ENCODE measurements at regions of chr6 and their contacts with region 1.

Region 1: DNA sequence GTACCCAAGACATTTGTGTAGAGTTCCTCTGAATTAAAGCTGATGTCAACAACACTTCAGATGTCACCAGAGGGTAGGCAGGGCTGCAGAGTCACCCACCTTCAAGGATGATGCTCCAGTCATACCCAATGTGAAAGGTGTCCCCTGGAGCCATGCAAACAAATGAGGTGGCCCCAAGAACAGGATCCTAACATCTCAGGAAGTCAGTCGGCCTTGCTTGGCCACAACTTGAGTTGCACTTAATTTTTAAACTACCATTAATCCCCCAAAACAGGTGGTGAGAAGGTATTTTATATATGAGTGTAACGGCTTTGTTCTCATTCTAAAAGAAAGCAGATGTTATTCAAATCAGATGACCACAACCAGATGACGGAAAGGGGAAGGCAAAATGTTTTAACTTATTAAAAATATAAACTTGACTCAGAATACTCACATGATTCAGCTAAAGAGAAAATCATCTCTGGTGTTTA is 21.1 kb upstream of the SERPINB1 start:
- DNase-seq: no peak
- ATAC-seq: peak; percentile 56
- H3K4me3 Mint-ChIP-seq: peak overlapping the region; percentile 56
- H3K27ac Mint-ChIP-seq: peak overlapping the region; percentile 92
- H3K4me1 Mint-ChIP-seq: peaks cover 91% of the 10 kb centered on the region
- H3K27me3 Mint-ChIP-seq: no peaks in the 10 kb centered on the region
- CTCF ChIP-seq: no peak

Region 2: GRCh38 chr6:2611090-2611489 is 251.7 kb before region 1 on chr6:
- CTCF ChIA-PET with region 1: no interaction called
- POLR2A ChIA-PET with region 1: no interaction called
- intact Hi-C with region 1: no loop called
- DNase-seq: no peak
- ATAC-seq: no peak
- H3K4me3 Mint-ChIP-seq: no peak overlapping the region
- H3K27ac Mint-ChIP-seq: no peak overlapping the region
- H3K4me1 Mint-ChIP-seq: no peaks in the 10 kb centered on the region
- H3K27me3 Mint-ChIP-seq: peaks cover 12% of the 10 kb centered on the region
- CTCF ChIP-seq: no peak

Region 3: GRCh38 chr6:2738373-2738979 is 124.3 kb before region 1 on chr6:
- CTCF ChIA-PET with region 1: no interaction called
- POLR2A ChIA-PET with region 1: interaction called, 12 read pairs
- intact Hi-C with region 1: no loop called
- DNase-seq: no peak
- ATAC-seq: no peak
- H3K4me3 Mint-ChIP-seq: no peak overlapping the region
- H3K27ac Mint-ChIP-seq: no peak overlapping the region
- H3K4me1 Mint-ChIP-seq: peaks cover 10% of the 10 kb centered on the region
- H3K27me3 Mint-ChIP-seq: no peaks in the 10 kb centered on the region
- CTCF ChIP-seq: no peak

Region 4: GRCh38 chr6:2876210-2877056 is 13.7 kb after region 1 on chr6:
- CTCF ChIA-PET with region 1: interaction called, 5 read pairs
- POLR2A ChIA-PET with region 1: no interaction called
- intact Hi-C with region 1: loop called (anchors 2 kb)
- DNase-seq: no peak
- ATAC-seq: peak; percentile 23
- H3K4me3 Mint-ChIP-seq: peak overlapping the region; percentile 88
- H3K27ac Mint-ChIP-seq: peak overlapping the region; percentile 99
- H3K4me1 Mint-ChIP-seq: peaks cover 85% of the 10 kb centered on the region
- H3K27me3 Mint-ChIP-seq: no peaks in the 10 kb centered on the region
- CTCF ChIP-seq: no peak

Region 5: GRCh38 chr6:2891768-2892170 is 29.0 kb after region 1 on chr6:
- CTCF ChIA-PET with region 1: interaction called, 4 read pairs
- POLR2A ChIA-PET with region 1: interaction called, 139 read pairs
- intact Hi-C with region 1: loop called (anchors 1 kb)
- DNase-seq: peak; percentile 58
- ATAC-seq: peak; percentile 84
- H3K4me3 Mint-ChIP-seq: peak overlapping the region; percentile 58
- H3K27ac Mint-ChIP-seq: peak overlapping the region; percentile 87
- H3K4me1 Mint-ChIP-seq: peaks cover 71% of the 10 kb centered on the region
- H3K27me3 Mint-ChIP-seq: no peaks in the 10 kb centered on the region
- CTCF ChIP-seq: no peak

Region 6: DNA sequence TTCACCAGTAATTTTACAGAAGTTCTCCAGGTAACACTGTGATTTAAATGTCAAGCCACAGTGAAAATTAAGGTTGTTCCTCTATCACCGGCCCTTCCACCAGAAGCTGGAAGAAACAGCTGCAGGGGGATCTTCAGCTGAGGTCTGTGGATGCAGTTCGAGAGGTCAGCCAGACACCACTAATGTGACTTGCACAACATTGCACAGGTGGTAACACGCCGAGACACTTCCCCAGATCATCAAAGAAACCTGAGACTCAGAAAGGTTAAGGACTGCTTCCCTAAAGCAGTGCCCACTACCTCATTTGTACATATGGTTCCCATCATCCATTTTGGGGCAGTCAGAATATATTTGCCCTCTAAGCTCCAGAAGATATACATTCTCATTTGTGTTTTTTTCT is 48.4 kb after region 1 on chr6:
- CTCF ChIA-PET with region 1: interaction called, 4 read pairs
- POLR2A ChIA-PET with region 1: interaction called, 35 read pairs
- intact Hi-C with region 1: loop called (anchors 1 kb)
- DNase-seq: no peak
- ATAC-seq: peak; percentile 80
- H3K4me3 Mint-ChIP-seq: peak overlapping the region; percentile 51
- H3K27ac Mint-ChIP-seq: peak overlapping the region; percentile 88
- H3K4me1 Mint-ChIP-seq: peaks cover 43% of the 10 kb centered on the region
- H3K27me3 Mint-ChIP-seq: no peaks in the 10 kb centered on the region
- CTCF ChIP-seq: no peak

Region 7: DNA sequence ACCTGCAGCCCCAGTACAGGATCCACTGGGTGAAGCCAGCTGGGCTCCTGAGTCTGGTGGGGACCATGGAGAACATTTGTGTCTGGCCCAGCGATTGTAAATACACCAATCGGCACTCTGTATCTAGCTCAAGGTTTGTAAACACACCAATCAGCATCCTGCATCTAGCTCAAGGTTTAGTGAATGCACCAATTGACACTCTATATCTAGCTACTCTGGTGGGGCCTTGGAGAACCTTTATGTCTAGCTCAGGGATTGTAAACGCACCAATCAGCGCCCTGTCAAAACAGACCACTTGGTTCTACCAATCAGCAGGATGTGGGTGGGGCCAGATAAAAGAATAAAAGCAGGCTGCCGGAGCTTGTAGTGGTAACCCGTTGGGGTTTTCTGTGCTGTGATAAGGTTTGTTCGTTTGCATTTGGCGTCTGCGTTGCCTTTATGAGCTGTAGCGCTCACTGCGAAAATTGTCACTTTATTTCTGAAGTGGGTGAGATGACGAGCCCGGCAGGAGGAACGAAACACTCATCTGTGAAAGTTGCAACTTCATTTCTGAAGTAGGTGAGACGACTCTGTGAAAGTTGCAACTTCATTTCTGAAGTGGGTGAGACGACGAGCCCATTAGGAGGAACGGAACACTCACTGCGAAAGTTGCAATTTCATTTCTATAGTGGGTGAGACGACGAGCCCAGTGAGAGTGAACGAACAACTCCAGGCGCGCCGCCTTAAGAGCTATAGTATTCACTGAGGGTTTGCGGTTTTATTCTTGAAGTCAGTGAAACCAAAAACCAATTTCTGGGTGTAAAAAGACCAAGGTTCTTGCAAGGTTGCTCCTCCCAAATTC is 77.5 kb after region 1 on chr6:
- CTCF ChIA-PET with region 1: interaction called, 3 read pairs
- POLR2A ChIA-PET with region 1: interaction called, 14 read pairs
- intact Hi-C with region 1: no loop called
- DNase-seq: peak; percentile 39
- ATAC-seq: peak; percentile 81
- H3K4me3 Mint-ChIP-seq: peak overlapping the region; percentile 82
- H3K27ac Mint-ChIP-seq: peak overlapping the region; percentile 94
- H3K4me1 Mint-ChIP-seq: peaks cover 69% of the 10 kb centered on the region
- H3K27me3 Mint-ChIP-seq: no peaks in the 10 kb centered on the region
- CTCF ChIP-seq: no peak